ENCODE measurements at regions of chr10 and their contacts with region 1.

Region 1: DNA sequence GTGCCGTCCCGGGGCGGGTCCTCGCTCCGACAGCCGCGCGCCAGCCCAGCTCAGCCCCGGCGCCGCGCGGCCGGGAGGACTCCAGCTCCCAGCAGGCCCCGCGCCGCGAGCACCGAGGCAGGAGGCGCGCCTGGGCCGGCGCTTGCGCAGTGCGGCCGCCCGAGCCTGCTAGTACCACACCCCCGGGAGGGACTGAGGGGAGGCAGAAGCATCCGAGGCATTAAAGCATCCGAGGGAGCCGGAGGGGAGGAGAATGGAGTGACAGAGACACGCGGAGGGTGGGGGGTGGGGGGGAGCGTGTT is at the start of gene GRK5:
- DNase-seq: peak; percentile 93
- H3K4me3 Mint-ChIP-seq: peak within 1 kb of the TSS; percentile 85
- H3K27ac Mint-ChIP-seq: peak within 1 kb of the TSS; percentile 90
- H3K4me1 Mint-ChIP-seq: peaks cover 33% of the 10 kb centered on the region
- H3K27me3 Mint-ChIP-seq: no peaks in the 10 kb centered on the region
- total RNA-seq, gene GRK5: 27.1 to 29.7 TPM

Region 2: DNA sequence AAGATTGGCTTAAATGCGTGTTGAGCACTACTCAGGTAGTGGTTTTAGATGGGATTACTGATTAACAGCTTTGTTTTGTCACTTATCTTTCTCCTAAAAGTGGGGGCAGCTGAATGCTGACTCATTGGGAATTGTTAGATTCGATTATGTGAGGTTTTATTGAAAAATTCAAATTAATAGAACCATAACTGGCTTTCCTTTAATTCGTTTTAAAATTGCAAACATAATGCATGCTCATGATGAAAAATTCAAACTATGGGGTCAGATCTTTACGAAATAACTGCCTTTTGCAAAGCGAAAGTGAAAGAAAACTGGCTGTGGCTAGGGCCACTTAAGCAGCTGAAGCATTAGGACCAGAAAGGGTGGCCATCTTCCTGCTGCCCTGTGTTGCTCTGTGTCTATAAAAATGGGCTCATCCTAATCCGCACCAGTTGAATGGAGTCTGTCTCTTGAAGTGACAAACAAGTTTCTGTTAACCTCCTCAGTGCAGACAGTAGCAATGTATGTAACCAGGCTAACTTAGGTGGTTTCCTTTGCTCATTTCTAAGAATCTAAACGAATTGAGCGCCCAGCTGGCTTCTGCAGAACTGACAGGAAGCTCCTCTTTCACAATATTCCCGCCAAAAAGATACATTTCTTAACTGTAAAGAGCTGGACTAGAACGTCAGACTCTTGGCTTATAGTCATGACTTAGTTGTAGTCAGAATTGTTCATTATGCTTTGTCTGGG is 75.6 kb before region 1 on chr10:
- CTCF ChIA-PET with region 1: no interaction called
- intact Hi-C with region 1: loop called (anchors 1 kb)
- DNase-seq: peak; percentile 80
- H3K4me3 Mint-ChIP-seq: peak overlapping the region; percentile 80
- H3K27ac Mint-ChIP-seq: peak overlapping the region; percentile 99
- H3K4me1 Mint-ChIP-seq: peaks cover 44% of the 10 kb centered on the region
- H3K27me3 Mint-ChIP-seq: no peaks in the 10 kb centered on the region

Region 3: GRCh38 chr10:119253433-119254174 is 46.3 kb after region 1 on chr10:
- CTCF ChIA-PET with region 1: interaction called, 7 read pairs
- intact Hi-C with region 1: loop called (anchors 1 kb)
- DNase-seq: peak; percentile 82
- H3K4me3 Mint-ChIP-seq: no peak overlapping the region
- H3K27ac Mint-ChIP-seq: peak overlapping the region; percentile 88
- H3K4me1 Mint-ChIP-seq: peaks cover 55% of the 10 kb centered on the region
- H3K27me3 Mint-ChIP-seq: no peaks in the 10 kb centered on the region

Region 4: GRCh38 chr10:119315128-119316001 is 108.0 kb after region 1 on chr10:
- CTCF ChIA-PET with region 1: interaction called, 9 read pairs
- intact Hi-C with region 1: loop called (anchors 1 kb)
- DNase-seq: peak; percentile 90
- H3K4me3 Mint-ChIP-seq: no peak overlapping the region
- H3K27ac Mint-ChIP-seq: peak overlapping the region; percentile 93
- H3K4me1 Mint-ChIP-seq: peaks cover 57% of the 10 kb centered on the region
- H3K27me3 Mint-ChIP-seq: no peaks in the 10 kb centered on the region

Region 5: DNA sequence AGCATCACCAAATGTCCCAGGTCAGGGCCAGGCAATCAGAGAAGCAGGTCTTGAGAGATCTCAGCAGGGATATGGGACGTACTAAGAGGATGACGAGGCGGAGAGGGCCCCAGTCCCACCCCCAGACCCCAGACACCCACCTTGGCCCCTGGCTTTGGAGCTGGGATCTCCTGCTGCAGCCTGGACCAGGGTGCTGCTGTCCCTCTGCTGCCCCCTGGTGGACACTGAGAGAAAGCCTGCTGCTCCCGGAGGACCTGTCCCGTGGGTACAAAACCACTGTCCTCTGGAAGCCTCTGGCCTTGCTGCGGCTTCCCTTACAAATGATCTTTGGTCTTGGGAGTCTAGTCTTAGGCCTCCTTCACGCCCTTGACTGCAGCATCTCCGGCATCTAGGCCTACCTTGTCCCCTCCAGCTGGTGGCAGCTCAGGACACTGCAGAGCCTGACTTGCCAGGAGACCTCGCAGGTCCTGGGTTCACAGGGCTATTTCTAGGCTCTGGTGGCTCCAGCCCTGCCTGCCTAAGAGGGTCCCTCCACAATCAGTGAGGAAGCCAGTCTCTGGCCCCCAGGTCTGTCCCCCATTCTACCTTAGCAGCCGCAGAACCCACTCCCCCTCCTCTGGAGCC is 238.1 kb after region 1 on chr10:
- CTCF ChIA-PET with region 1: interaction called, 31 read pairs
- intact Hi-C with region 1: loop called (anchors 1 kb)
- DNase-seq: peak; percentile 92
- H3K4me3 Mint-ChIP-seq: no peak overlapping the region
- H3K27ac Mint-ChIP-seq: no peak overlapping the region
- H3K4me1 Mint-ChIP-seq: peaks cover 9% of the 10 kb centered on the region
- H3K27me3 Mint-ChIP-seq: no peaks in the 10 kb centered on the region

Region 6: GRCh38 chr10:119596537-119597404 is 389.5 kb after region 1 on chr10 and contains the start of gene TIAL1:
- CTCF ChIA-PET with region 1: interaction called, 3 read pairs
- intact Hi-C with region 1: loop called (anchors 1 kb)
- DNase-seq: peak; percentile 98
- H3K4me3 Mint-ChIP-seq: peak within 1 kb of the TSS; percentile 93
- H3K27ac Mint-ChIP-seq: peak within 1 kb of the TSS; percentile 98
- H3K4me1 Mint-ChIP-seq: peaks cover 47% of the 10 kb centered on the region
- H3K27me3 Mint-ChIP-seq: no peaks in the 10 kb centered on the region
- total RNA-seq, gene TIAL1: 184 to 192 TPM